IMR-90 (cell line): ENCODE measurements at regions of chr6 and their contacts with region 1.

Region 1: DNA sequence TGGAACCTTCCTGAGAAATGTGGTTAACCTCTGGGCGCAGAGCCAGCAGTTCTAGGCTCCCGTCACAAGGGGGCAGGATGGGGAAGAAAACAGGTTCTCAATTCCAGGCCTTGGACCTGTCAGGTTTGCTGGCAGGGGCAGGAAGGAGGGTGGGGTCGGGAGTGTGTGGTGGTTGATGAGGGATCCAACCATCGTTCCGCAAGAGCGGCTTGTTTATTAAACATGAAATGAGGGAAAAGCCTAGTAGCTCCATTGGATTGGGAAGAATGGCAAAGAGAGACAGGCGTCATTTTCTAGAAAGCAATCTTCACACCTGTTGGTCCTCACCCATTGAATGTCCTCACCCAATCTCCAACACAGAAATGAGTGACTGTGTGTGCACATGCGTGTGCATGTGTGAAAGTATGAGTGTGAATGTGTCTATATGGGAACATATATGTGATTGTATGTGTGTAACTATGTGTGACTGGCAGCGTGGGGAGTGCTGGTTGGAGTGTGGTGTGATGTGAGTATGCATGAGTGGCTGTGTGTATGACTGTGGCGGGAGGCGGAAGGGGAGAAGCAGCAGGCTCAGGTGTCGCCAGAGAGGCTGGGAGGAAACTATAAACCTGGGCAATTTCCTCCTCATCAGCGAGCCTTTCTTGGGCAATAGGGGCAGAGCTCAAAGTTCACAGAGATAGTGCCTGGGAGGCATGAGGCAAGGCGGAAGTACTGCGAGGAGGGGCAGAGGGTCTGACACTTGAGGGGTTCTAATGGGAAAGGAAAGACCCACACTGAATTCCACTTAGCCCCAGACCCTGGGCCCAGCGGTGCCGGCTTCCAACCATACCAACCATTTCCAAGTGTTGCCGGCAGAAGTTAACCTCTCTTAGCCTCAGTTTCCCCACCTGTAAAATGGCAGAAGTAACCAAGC is 29.6 kb downstream of the SRSF3 start:
- DNase-seq: peak; percentile 77
- ATAC-seq: peak; percentile 67
- H3K4me3 ChIP-seq: no peak overlapping the region
- H3K27ac ChIP-seq: no peak overlapping the region
- H3K4me1 ChIP-seq: peaks cover 13% of the 10 kb centered on the region
- H3K27me3 ChIP-seq: no peaks in the 10 kb centered on the region
- CTCF ChIP-seq: peak; percentile 90
- POLR2A ChIP-seq: no peak
- RAD21 ChIP-seq: peak; percentile 90

Region 2: DNA sequence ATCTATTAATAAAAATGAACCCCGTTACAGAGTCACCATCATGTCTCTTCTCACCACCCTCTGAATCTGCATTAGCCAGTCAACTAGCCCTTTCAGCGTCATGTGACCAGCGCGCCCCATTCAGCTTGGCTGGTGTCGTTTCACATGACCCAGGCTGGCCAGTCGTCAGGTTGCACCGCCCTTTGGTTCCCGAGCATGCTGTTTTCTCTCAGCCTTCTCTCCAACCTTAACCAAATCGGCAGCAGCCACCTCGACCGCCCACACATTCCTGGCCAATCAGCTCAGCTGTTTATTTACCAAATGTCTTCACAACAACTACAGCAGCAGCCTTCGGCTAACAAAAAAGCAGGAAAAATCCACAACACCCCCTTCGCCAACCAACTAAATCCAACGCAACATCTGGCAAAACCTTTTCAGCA is 24.0 kb before region 1 on chr6:
- CTCF ChIA-PET with region 1: no interaction called
- POLR2A ChIA-PET with region 1: interaction called, 11 read pairs
- dilution Hi-C with region 1: no loop called
- in situ Hi-C with region 1: no loop called
- intact Hi-C with region 1: no loop called
- DNase-seq: peak; percentile 40
- ATAC-seq: peak; percentile 10; the same call in 1 of the 2 replicates
- H3K4me3 ChIP-seq: no peak overlapping the region
- H3K27ac ChIP-seq: no peak overlapping the region
- H3K4me1 ChIP-seq: peaks cover 10% of the 10 kb centered on the region
- H3K27me3 ChIP-seq: no peaks in the 10 kb centered on the region
- CTCF ChIP-seq: no peak
- POLR2A ChIP-seq: no peak
- RAD21 ChIP-seq: no peak

Region 3: GRCh38 chr6:36724514-36725390 is 100.9 kb after region 1 on chr6:
- CTCF ChIA-PET with region 1: interaction called, 4 read pairs
- POLR2A ChIA-PET with region 1: no interaction called
- dilution Hi-C with region 1: no loop called
- in situ Hi-C with region 1: loop called (anchors 5 kb)
- intact Hi-C with region 1: loop called (anchors 1 kb)
- DNase-seq: peak; percentile 65
- ATAC-seq: peak; percentile 90
- H3K4me3 ChIP-seq: no peak overlapping the region
- H3K27ac ChIP-seq: no peak overlapping the region
- H3K4me1 ChIP-seq: no peaks in the 10 kb centered on the region
- H3K27me3 ChIP-seq: peaks cover 8% of the 10 kb centered on the region; the same call in 1 of the 2 replicates
- CTCF ChIP-seq: peak; percentile 73
- POLR2A ChIP-seq: no peak
- RAD21 ChIP-seq: peak; percentile 80

Region 4: DNA sequence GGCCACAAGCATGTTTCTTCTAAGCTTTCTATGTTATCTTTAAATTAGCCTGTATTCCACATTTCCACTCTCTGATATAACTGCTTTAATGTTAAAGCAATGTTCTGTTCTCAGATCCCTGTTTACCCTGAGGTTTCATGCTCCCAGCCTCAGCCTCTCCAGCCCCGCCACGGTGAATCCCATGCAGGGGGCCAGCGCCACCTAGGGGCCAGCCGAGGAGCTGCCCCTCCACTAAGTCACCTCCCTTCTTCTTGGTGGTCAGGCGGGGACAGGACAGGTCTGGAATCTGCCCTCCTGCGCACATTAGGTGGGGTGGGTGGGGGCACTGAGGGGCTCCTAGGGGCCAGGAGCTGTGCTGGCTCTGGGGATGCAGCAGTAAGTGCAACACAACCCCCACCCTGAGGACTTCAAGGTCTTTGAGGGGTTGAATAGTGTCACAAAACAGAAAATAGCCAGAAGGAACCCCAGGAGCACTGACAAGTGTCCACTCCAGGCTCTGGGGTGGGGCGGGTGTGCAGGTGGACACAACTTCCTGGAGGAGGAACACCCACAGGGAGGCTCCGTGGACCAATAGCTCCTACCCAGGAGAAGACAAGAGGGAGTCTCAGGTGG is 135.5 kb after region 1 on chr6:
- CTCF ChIA-PET with region 1: no interaction called
- POLR2A ChIA-PET with region 1: no interaction called
- dilution Hi-C with region 1: no loop called
- in situ Hi-C with region 1: loop called (anchors 5 kb)
- intact Hi-C with region 1: loop called (anchors 2 kb)
- DNase-seq: peak; percentile 68
- ATAC-seq: peak; percentile 99
- H3K4me3 ChIP-seq: no peak overlapping the region
- H3K27ac ChIP-seq: no peak overlapping the region
- H3K4me1 ChIP-seq: no peaks in the 10 kb centered on the region
- H3K27me3 ChIP-seq: peaks cover 18% of the 10 kb centered on the region
- CTCF ChIP-seq: peak; percentile 98
- POLR2A ChIP-seq: no peak
- RAD21 ChIP-seq: peak; percentile 95

Region 5: DNA sequence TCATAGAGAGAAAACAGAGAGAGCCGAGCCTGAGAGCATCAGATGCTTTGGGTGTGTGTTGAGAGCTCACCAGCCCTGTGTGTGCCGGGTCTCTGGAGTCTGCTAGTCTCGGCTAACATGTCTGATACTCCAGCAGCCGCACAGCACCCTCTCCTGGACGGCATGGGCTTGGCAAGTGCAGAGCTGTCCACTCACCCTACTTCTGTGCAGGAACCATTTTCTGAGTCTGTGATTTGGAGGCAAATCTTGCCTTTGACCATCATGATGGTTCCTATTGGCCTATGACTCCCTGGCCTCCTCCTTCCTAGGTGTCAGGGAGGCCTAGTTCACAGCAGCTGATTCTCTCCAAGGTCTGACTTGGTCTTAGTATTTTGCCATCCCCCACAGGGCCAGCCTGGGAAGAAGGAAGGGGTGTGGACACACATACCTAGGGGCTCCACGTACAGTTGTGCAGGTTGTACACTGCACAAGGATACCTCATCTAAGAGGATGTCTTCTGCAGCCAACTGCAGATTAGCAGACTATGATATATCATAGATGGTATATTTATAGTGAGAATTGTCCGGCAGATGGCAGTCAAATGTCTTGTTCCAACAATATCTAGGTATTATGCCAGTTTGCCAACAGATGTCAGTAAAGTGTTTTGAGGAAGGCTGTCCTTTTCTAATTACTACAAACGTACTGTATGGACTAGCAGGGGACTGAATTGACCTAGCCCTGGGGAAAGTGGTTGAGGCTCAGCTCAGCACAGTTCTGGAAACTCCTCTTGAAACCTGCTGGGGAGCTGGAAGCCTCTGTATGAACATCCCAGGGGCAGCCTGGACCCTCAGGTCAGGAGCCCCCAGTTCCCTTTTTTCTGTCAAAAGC is 394.6 kb after region 1 on chr6:
- CTCF ChIA-PET with region 1: no interaction called
- POLR2A ChIA-PET with region 1: no interaction called
- dilution Hi-C with region 1: no loop called
- in situ Hi-C with region 1: no loop called
- intact Hi-C with region 1: loop called (anchors 10 kb)
- DNase-seq: peak; percentile 87
- ATAC-seq: peak; percentile 99
- H3K4me3 ChIP-seq: no peak overlapping the region
- H3K27ac ChIP-seq: no peak overlapping the region
- H3K4me1 ChIP-seq: no peaks in the 10 kb centered on the region; the same call in 1 of the 2 replicates
- H3K27me3 ChIP-seq: no peaks in the 10 kb centered on the region
- CTCF ChIP-seq: peak; percentile 97
- POLR2A ChIP-seq: no peak
- RAD21 ChIP-seq: peak; percentile 96